Heart left ventricle (tissue), 16 donors: ENCODE measurements at regions of chr2 and their contacts with region 1.

Region 1: GRCh38 chr2:148020111-148021058 is at the start of gene ORC4:
- DNase-seq: peak; percentile 97 to 99 (median 99)
- ATAC-seq: peak; percentile 98 to 99 (median 98)
- H3K4me3 ChIP-seq: peak within 1 kb of the TSS; percentile 73 to 94 (median 84)
- H3K27ac ChIP-seq: peak within 1 kb of the TSS; percentile 61 to 98 (median 93)
- H3K4me1 ChIP-seq: peaks cover 3 to 50% (median 34%) of the 10 kb centered on the region in 12 donors
- H3K27me3 ChIP-seq: no peaks in the 10 kb centered on the region
- CTCF ChIP-seq: peak in 10 of 12 donors; percentile 3 to 57 (median 34)
- POLR2A ChIP-seq: peak in 1 of 2 donors; percentile 54
- total RNA-seq, gene ORC4: 33.4 to 64.7 (median 44.1) TPM

Region 2: DNA sequence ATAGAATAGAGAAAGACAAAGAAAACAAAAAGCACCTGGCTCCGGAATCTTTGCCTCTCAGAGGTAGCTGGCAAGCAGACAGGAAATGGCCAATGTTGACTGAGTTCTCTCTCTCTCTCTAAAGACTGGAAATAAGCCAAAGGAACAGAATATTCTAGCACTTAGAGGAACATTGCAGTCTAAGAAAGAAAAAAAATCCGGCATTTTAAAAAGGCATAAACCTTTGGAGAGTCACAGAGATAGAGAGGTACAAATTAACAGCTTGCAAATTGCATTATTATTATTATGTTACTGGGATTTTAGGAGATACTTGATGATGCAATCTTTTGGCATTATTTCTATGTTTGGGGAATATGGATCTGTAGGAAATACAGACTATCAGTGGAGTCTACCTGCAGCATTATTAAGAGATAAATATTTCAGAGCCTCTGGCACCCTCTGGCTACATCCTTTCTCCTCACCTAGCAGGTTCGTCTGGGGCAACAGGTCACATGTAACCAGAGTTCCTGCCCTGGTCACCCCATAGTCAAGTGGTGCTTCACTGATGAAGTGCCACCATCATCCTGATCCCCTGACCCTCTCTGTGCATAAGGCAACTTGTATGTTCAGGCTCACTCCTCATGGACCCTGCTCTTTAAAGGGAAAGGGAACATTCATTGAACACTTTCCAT is 494.4 kb before region 1 on chr2:
- intact Hi-C with region 1: no loop called
- DNase-seq: no peak
- ATAC-seq: no peak
- H3K4me3 ChIP-seq: no peak overlapping the region
- H3K27ac ChIP-seq: no peak overlapping the region
- H3K4me1 ChIP-seq: peaks cover 0 to 6% (median 0%) of the 10 kb centered on the region in 12 donors
- H3K27me3 ChIP-seq: no peaks in the 10 kb centered on the region
- CTCF ChIP-seq: no peak
- POLR2A ChIP-seq: no peak

Region 3: DNA sequence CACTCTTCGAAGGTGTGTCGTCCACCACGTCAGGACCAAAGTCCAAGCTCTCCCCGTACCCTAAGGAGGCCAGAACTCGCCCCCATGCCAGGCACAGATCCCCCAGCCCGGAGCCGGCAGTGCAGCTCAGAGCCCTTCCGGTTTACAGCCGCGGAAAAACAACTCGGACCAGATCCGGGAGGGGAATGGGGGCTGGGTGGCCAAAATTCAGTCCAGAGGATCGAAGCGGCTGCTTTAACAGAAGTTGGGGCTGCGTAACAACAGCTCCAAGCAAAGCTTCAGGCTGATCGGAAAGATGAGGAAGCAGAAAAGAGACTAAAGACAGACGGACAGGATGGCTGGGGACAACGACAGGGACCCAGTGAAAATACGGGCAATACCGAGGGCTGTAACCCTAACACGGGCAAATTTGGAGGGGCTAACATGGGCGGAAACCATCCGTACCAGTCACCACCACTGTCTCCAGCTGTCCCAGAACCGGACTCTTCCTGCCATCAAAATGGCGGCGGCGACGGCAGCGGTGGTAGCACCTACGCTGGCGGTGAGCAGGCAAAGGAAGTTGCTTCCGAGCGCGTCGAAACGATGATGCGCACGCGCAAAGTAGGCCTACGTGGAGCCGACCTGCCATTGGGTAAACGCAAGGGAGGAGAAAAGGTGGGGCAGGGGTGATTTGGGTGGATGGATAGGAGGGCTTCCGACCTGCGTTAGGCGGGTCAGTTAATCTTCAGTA is 1567.0 kb after region 1 on chr2 and contains the start of gene MMADHC:
- intact Hi-C with region 1: loop called in 1 of 10 experiments (anchors 10 kb)
- DNase-seq: peak; percentile 93 to 97 (median 96)
- ATAC-seq: peak; percentile 99
- H3K4me3 ChIP-seq: peak within 1 kb of the TSS; percentile 58 to 92 (median 81)
- H3K27ac ChIP-seq: peak within 1 kb of the TSS; percentile 84 to 98 (median 96)
- H3K4me1 ChIP-seq: peaks cover 4 to 50% (median 31%) of the 10 kb centered on the region in 12 donors
- H3K27me3 ChIP-seq: no peaks in the 10 kb centered on the region
- CTCF ChIP-seq: peak in 1 of 12 donors; percentile 11
- POLR2A ChIP-seq: peak in 1 of 2 donors; percentile 75
- total RNA-seq, gene MMADHC: 66.6 to 130 (median 117) TPM